ENCODE measurements at regions of chr1 and their contacts with region 1.

Region 1: DNA sequence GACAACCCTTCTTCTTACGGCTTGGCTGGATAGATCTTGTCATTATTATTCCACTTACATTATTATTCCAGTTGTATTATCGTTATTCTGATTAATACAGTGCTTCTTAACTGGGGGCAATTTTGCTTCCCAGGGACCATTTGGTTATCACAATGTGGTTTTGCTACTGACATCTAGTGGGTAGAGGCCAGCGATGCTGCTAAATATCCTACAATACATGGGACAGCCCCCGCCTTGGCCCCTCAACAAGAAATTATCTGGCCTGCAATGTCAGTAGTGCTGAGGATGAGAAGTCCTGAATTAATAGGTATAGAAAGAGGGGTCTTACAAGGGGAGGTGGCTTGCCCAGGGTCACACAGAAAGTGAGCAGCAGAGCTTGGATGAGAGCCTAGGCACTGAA is 105.6 kb downstream of the PTPRU start:
- DNase-seq: no peak
- H3K4me3 ChIP-seq: no peak overlapping the region
- H3K27ac ChIP-seq: no peak overlapping the region
- H3K4me1 ChIP-seq: no peaks in the 10 kb centered on the region
- H3K27me3 ChIP-seq: no peaks in the 10 kb centered on the region; the same call in 1 of the 2 replicates
- CTCF ChIP-seq: no peak; the same call in 1 of the 2 replicates

Region 2: DNA sequence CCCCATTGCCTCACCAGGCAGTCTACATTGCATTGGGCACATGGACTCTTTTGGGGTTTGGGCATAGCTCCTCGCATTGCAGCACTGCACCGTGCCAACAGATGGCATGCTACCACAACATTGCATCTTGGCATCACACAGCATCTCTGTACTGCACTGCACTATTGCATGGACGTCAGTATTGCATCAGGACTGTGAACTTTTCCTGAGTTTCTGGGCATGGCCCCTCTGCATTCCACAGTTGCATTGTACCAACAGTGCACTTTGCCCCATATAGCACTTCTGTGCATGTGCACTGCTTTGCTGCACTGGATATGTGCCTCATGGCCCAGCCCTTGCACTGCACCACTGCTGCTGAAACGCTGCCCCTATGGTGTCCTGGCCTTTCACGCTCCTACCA is 96.1 kb before region 1 on chr1:
- CTCF ChIA-PET with region 1: interaction called, 11 read pairs
- POLR2A ChIA-PET with region 1: no interaction called
- intact Hi-C with region 1: no loop called
- DNase-seq: peak in 1 of 2 experiments; percentile 35
- H3K4me3 ChIP-seq: no peak overlapping the region
- H3K27ac ChIP-seq: no peak overlapping the region
- H3K4me1 ChIP-seq: peaks cover 32% of the 10 kb centered on the region
- H3K27me3 ChIP-seq: no peaks in the 10 kb centered on the region
- CTCF ChIP-seq: peak; percentile 43; the same call in 1 of the 2 replicates

Region 3: GRCh38 chr1:29271724-29272123 is 70.2 kb before region 1 on chr1:
- CTCF ChIA-PET with region 1: no interaction called
- POLR2A ChIA-PET with region 1: no interaction called
- intact Hi-C with region 1: no loop called
- DNase-seq: peak; percentile 83 to 84
- H3K4me3 ChIP-seq: no peak overlapping the region
- H3K27ac ChIP-seq: peak overlapping the region; percentile 58
- H3K4me1 ChIP-seq: peaks cover 24% of the 10 kb centered on the region
- H3K27me3 ChIP-seq: no peaks in the 10 kb centered on the region
- CTCF ChIP-seq: no peak

Region 4: GRCh38 chr1:29698033-29698432 is 356.1 kb after region 1 on chr1:
- CTCF ChIA-PET with region 1: no interaction called
- POLR2A ChIA-PET with region 1: no interaction called
- intact Hi-C with region 1: no loop called
- DNase-seq: peak; percentile 34 to 53
- H3K4me3 ChIP-seq: no peak overlapping the region
- H3K27ac ChIP-seq: no peak overlapping the region
- H3K4me1 ChIP-seq: no peaks in the 10 kb centered on the region
- H3K27me3 ChIP-seq: no peaks in the 10 kb centered on the region
- CTCF ChIP-seq: peak; percentile 72

Region 5: DNA sequence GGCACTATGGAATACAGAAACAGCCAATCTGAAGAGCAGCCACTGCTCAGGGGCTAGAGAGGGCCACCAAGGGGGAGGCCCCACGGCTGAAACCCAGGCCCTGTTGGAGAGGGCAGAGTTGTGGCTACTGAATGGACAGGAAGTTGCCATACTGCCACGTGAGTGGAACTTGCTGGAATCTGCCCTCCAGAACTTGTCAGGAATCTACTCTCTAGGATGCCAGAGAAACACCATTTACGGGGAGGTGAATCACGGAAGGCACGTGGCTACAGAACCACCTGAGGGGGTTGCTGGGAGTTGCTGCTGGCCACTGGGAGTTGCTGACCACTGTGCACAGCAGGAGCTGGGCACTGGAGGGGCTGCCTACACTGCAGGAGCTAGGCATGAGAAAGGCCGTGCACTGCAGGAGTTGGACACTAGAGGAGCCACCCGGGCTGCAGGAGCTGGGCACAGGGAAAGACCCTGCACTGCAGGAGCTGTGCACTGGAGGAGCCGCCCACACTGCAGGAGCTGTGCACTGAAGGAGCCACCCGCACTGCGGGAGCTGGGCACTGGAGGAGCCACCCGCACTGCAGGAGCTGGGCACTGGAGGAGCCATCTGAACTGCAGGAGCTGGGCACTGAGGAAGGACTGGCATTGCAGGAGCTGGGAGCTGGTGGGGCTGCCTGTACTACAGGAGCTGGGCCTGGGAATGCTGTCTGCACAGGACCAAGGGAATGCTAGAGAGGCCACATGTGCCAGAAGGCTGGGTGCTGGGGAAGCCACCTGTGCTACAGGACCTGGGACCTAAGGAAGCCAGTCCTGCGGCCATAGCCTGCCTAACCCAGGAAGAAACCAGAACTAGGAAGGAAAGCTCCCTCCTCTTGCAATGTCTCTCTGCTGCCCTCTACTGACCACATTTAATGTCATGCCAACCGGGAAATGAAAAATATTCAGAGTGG is 1038.0 kb after region 1 on chr1:
- CTCF ChIA-PET with region 1: no interaction called
- POLR2A ChIA-PET with region 1: no interaction called
- intact Hi-C with region 1: loop called (anchors 5 kb)
- DNase-seq: peak in 1 of 2 experiments; percentile 32
- H3K4me3 ChIP-seq: no peak overlapping the region
- H3K27ac ChIP-seq: no peak overlapping the region
- H3K4me1 ChIP-seq: no peaks in the 10 kb centered on the region
- H3K27me3 ChIP-seq: peaks cover 19% of the 10 kb centered on the region; the same call in 1 of the 2 replicates
- CTCF ChIP-seq: peak; percentile 74